PC-9 (cell line): ENCODE measurements at regions of chr10 and their contacts with region 1.

Region 1: GRCh38 chr10:91163269-91163868 is 57.1 kb upstream of the PCGF5 start:
- DNase-seq: peak in 1 of 2 experiments; percentile 42
- H3K4me3 ChIP-seq: peak overlapping the region; percentile 84
- H3K27ac ChIP-seq: peak overlapping the region; percentile 66
- H3K4me1 ChIP-seq: 0 out of 2 replicates have a peak, but pooled peaks cover 11% of the 10 kb centered on the region
- H3K27me3 ChIP-seq: no peaks in the 10 kb centered on the region
- CTCF ChIP-seq: no peak

Region 2: GRCh38 chr10:89783406-89783805 is 1380.0 kb before region 1 on chr10:
- CTCF ChIA-PET with region 1: no interaction called
- POLR2A ChIA-PET with region 1: no interaction called
- intact Hi-C with region 1: no loop called
- DNase-seq: no peak
- H3K4me3 ChIP-seq: no peak overlapping the region
- H3K27ac ChIP-seq: no peak overlapping the region
- H3K4me1 ChIP-seq: no peaks in the 10 kb centered on the region
- H3K27me3 ChIP-seq: no peaks in the 10 kb centered on the region
- CTCF ChIP-seq: no peak

Region 3: DNA sequence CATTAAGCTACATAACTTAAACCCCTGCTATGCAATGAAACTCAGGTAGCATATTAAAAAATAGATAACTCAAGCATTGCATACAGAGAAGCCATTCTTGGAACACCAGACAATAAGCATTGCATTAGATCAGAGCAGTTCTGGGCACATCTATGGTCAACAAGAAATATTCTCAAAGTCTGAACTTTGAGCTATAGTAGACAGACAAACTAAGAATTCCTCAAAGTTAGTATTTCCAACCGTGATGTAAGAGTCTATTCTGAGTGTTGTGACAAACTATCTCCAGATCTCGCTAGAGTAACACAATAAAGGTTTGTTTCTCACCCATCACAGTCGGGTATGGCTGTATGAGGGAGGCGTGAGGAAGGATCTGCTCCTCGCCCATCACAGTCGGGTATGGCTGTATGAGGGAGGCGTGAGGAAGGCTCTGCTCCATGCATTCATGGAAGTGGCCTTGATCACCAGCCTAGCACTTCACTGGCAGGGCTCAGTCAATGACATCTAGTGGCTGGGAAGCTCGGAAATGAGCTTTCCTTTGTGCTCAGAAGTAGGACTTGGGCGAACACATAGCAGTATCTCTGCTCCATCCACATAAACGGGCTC is 180.9 kb before region 1 on chr10:
- CTCF ChIA-PET with region 1: interaction called, 20 read pairs
- POLR2A ChIA-PET with region 1: no interaction called
- intact Hi-C with region 1: no loop called
- DNase-seq: no peak
- H3K4me3 ChIP-seq: no peak overlapping the region
- H3K27ac ChIP-seq: no peak overlapping the region
- H3K4me1 ChIP-seq: no peaks in the 10 kb centered on the region
- H3K27me3 ChIP-seq: no peaks in the 10 kb centered on the region
- CTCF ChIP-seq: no peak

Region 4: DNA sequence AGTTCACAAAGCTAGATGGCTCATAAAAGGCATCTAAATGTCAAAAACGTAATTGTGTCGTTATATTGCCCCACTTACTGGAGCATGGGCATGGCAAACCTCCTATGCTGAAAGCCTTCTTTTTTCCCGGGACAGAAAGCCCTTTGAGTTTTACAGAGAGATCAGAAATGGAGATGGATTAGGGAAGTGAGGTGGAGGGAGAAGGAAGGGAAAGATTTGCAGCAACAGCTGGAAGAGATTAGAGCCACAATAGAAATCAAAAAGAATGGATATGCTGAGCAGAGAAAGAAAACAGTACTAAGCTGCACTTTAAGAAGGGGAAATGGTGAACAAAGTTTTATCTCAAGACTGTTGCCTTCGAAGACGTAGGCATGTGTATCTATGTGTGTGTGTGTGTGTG is 40.1 kb before region 1 on chr10:
- CTCF ChIA-PET with region 1: no interaction called
- POLR2A ChIA-PET with region 1: interaction called, 16 read pairs
- intact Hi-C with region 1: no loop called
- DNase-seq: no peak
- H3K4me3 ChIP-seq: no peak overlapping the region
- H3K27ac ChIP-seq: no peak overlapping the region
- H3K4me1 ChIP-seq: no peaks in the 10 kb centered on the region
- H3K27me3 ChIP-seq: no peaks in the 10 kb centered on the region
- CTCF ChIP-seq: no peak

Region 5: GRCh38 chr10:91220194-91220953 is 57.0 kb after region 1 on chr10 and contains the start of gene PCGF5:
- CTCF ChIA-PET with region 1: no interaction called
- POLR2A ChIA-PET with region 1: no interaction called
- intact Hi-C with region 1: loop called (anchors 2 kb)
- DNase-seq: peak; percentile 55 to 90
- H3K4me3 ChIP-seq: peak within 1 kb of the TSS; percentile 69
- H3K27ac ChIP-seq: no peak within 1 kb of the TSS
- H3K4me1 ChIP-seq: peaks cover 13% of the 10 kb centered on the region
- H3K27me3 ChIP-seq: no peaks in the 10 kb centered on the region
- CTCF ChIP-seq: no peak
- total RNA-seq, gene PCGF5: 20.4 and 27.7 TPM in 2 replicates

Region 6: DNA sequence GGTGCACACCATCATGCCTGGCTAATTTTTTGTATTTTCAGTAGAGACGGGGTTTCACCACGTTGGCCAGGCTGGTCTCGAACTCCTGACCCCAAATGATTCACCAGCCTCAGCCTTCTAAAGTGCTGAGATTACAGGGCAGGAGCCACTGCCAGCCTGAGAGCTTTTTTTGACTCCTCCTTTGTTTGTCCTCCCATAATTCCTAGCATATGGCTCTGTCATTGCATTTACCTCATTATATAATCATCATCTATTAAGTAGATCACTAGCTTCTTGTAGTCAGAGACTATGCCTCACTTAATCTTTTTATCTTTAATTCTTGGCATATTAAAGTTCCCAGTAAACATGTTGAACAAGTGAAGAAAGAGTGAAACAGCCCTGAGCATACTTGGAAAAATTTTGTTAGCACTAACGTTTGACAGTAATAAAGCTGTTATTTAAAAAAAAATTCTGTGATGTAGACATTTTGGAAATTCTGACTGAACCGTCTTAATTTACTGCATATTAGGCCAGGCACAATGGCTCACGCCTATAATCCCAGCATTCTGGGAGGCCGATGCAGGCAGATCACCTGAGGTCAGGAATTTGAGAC is 1045.5 kb after region 1 on chr10:
- CTCF ChIA-PET with region 1: no interaction called
- POLR2A ChIA-PET with region 1: interaction called, 13 read pairs
- intact Hi-C with region 1: no loop called
- DNase-seq: peak in 1 of 2 experiments; percentile 39
- H3K4me3 ChIP-seq: no peak overlapping the region
- H3K27ac ChIP-seq: no peak overlapping the region
- H3K4me1 ChIP-seq: peaks cover 6% of the 10 kb centered on the region
- H3K27me3 ChIP-seq: no peaks in the 10 kb centered on the region
- CTCF ChIP-seq: no peak